ENCODE measurements at regions of chr6 and their contacts with region 1.

Region 1: DNA sequence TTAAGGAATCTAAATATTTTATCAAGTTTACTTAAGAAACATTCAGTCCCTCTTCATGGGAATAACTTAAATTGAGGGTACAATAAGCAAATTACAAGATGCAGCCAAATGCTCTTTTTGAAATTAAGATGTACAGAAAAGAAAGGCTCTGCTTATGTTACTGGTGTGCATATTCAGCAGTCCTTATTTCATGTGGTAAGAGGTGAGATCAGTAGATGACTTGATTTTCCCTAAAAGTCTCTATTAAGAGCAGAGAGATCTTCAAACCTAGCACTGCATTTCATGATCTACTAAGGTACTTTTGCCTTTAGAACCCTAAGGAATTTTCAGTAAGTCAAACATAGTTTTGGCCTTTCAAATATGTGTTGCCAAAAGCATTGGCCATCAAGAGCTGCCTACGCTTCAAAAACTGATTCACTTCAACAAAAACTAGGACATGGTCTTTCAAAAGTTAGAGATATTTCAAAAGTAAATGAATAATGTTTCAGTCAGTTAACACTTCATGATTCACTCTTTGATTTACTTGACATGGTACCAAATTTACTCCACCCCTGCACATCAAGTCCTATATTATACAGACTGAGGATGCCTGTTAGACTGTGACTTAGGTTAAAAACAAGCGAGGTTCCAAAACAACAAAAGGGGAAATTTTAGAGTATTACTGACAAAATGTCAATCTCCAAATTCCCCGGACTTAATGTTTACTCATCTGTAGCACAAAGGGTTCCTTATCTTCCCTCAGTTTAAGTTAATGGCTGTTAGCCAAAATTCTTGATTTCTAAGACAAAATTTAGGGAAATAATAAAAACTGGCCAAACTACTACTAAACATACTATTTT is 19.2 kb downstream of the C6orf62 start:
- DNase-seq: no peak
- H3K4me3 Mint-ChIP-seq: no peak overlapping the region
- H3K27ac Mint-ChIP-seq: peak overlapping the region; percentile 84
- H3K4me1 Mint-ChIP-seq: peaks cover 45% of the 10 kb centered on the region
- H3K27me3 Mint-ChIP-seq: no peaks in the 10 kb centered on the region

Region 2: GRCh38 chr6:24646782-24647181 is 53.0 kb before region 1 on chr6:
- CTCF ChIA-PET with region 1: no interaction called
- intact Hi-C with region 1: loop called (anchors 5 kb)
- DNase-seq: no peak
- H3K4me3 Mint-ChIP-seq: peak overlapping the region; percentile 84
- H3K27ac Mint-ChIP-seq: no peak overlapping the region
- H3K4me1 Mint-ChIP-seq: peaks cover 13% of the 10 kb centered on the region
- H3K27me3 Mint-ChIP-seq: peaks cover 13% of the 10 kb centered on the region

Region 3: DNA sequence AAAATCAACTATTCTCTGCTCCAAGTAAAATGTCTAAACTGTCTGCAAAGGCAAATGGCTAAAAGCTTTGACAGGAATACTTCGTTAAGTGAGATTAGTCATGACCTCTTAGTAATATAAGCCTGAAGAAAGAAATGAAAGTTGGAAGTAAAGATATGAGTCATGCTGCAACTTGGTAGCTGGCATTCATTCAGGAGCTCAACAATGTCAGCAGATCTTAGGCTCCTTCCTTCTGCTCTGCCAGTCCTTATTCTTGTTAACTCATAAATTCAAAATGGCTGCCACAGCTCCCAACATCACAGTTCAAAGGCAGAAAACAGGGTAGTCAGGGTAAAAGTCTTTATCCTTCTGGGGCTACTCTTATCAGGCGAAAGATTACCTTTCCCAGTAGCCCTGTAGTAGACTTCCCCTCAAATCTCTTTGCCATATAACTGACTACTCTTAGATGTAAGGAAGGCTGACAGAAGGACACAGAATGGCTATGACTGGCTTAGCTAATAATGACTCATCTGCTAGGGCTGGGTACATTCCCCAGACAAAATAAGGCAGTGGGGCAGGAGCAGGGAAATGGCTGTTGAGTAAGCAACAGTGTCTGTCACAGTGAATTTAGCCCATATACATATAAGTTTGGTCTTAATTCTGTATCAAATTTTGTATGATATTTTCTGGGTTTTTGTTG is 43.7 kb after region 1 on chr6:
- CTCF ChIA-PET with region 1: interaction called, 4 read pairs
- intact Hi-C with region 1: loop called (anchors 1 kb)
- DNase-seq: peak; percentile 75
- H3K4me3 Mint-ChIP-seq: peak overlapping the region; percentile 13
- H3K27ac Mint-ChIP-seq: peak overlapping the region; percentile 88
- H3K4me1 Mint-ChIP-seq: peaks cover 28% of the 10 kb centered on the region
- H3K27me3 Mint-ChIP-seq: peaks cover 4% of the 10 kb centered on the region

Region 4: GRCh38 chr6:24755284-24755683 is 55.5 kb after region 1 on chr6:
- CTCF ChIA-PET with region 1: no interaction called
- intact Hi-C with region 1: no loop called
- DNase-seq: no peak
- H3K4me3 Mint-ChIP-seq: no peak overlapping the region
- H3K27ac Mint-ChIP-seq: no peak overlapping the region
- H3K4me1 Mint-ChIP-seq: no peaks in the 10 kb centered on the region
- H3K27me3 Mint-ChIP-seq: peaks cover 3% of the 10 kb centered on the region

Region 5: DNA sequence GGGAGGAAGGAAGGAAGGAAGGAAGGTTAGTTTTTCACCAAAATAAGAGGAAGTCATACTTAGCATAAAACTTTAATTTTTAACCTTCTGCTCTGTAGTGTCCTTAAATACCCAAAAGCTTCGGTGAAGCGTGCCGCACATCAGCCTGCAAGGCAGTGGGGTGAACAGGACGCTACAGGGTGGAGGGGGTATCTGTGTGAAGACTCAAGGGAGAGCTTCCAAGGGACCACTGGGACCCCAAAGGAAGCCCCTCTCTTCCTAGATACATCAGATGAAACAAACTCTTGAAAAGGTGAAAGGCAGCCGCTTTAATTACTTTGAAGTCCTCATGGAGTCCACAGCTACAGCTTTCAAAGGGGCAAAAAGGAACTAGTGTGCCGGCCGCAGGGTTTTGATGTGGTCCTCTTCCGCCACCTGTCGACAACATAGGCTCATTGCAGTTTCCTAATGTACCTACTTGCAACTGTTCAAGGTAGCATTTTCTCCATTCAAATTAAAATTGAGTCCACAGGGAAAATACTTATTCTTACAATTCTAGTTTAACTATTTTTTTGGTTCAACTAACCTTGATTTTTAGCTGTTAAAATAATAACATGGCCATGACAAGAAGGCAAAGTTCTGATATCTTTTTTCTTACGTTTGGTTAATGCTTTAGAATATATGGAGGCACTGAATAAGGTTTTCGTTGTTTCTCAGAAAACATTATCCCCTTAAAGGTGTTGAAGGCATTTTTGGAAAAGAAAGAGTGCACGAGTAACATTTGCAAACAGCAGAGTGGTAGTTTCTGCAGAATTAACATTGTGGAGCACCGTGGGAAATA is 371.0 kb after region 1 on chr6:
- CTCF ChIA-PET with region 1: no interaction called
- intact Hi-C with region 1: loop called (anchors 5 kb)
- DNase-seq: peak; percentile 91
- H3K4me3 Mint-ChIP-seq: peak overlapping the region; percentile 38
- H3K27ac Mint-ChIP-seq: peak overlapping the region; percentile 70
- H3K4me1 Mint-ChIP-seq: peaks cover 10% of the 10 kb centered on the region
- H3K27me3 Mint-ChIP-seq: no peaks in the 10 kb centered on the region

Measured in activated naive CD4-positive, alpha-beta T cell treated with anti-CD3 and anti-CD28 coated beads for 36 hours (primary cell).